Tibial artery (tissue), 4 donors: ENCODE measurements at regions of chr6 and their contacts with region 1.

Region 1: DNA sequence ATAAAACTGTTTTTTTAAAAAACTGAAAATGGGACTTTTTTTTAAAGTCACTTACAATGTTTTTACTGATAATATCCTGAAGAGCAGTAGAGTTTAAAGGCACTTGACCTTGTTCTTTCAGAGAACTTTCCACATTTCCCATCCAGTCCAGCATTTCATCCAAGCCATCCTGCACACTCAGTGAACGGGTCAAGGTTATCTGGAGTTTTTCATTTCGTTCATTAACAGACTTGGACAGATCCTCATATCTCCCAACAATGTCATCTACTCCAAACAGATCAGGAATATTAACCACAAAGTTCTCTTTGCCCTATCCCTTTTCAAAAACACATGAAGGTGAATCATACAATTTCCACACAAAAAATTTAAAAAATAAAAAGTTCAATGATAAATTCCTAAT is 69.1 kb downstream of the DST start:
- DNase-seq: no peak
- H3K4me3 ChIP-seq: no peak overlapping the region
- H3K27ac ChIP-seq: peak overlapping the region in 1 of 2 donors; percentile 34
- H3K4me1 ChIP-seq: peaks cover 0 to 17% (median 0%) of the 10 kb centered on the region in 4 donors
- H3K27me3 ChIP-seq: no peaks in the 10 kb centered on the region
- CTCF ChIP-seq: no peak

Region 2: GRCh38 chr6:56595490-56596122 is 22.0 kb after region 1 on chr6:
- intact Hi-C with region 1: loop called (anchors 2 kb)
- DNase-seq: no peak
- H3K4me3 ChIP-seq: no peak overlapping the region
- H3K27ac ChIP-seq: peak overlapping the region in 1 of 2 donors; percentile 10
- H3K4me1 ChIP-seq: no peaks in the 10 kb centered on the region
- H3K27me3 ChIP-seq: no peaks in the 10 kb centered on the region
- CTCF ChIP-seq: peak; percentile 47 to 61

Region 3: GRCh38 chr6:56742122-56742791 is 168.6 kb after region 1 on chr6:
- intact Hi-C with region 1: no loop called
- DNase-seq: no peak
- H3K4me3 ChIP-seq: peak overlapping the region; percentile 2 to 21
- H3K27ac ChIP-seq: peak overlapping the region in 1 of 2 donors; percentile 2
- H3K4me1 ChIP-seq: peaks cover 0 to 31% (median 6%) of the 10 kb centered on the region in 4 donors
- H3K27me3 ChIP-seq: no peaks in the 10 kb centered on the region
- CTCF ChIP-seq: no peak